Right cardiac atrium (tissue), 5 donors: ENCODE measurements at regions of chr3 and their contacts with region 1.

Region 1: GRCh38 chr3:183385698-183386613 is 42.5 kb downstream of the MCF2L2 start:
- DNase-seq: no peak
- ATAC-seq: peak; percentile 74 to 84
- H3K4me3 ChIP-seq: no peak overlapping the region
- H3K27ac ChIP-seq: no peak overlapping the region
- H3K4me1 ChIP-seq: no peaks in the 10 kb centered on the region
- H3K27me3 ChIP-seq: no peaks in the 10 kb centered on the region

Region 2: GRCh38 chr3:183116025-183116614 is 269.8 kb before region 1 on chr3:
- intact Hi-C with region 1: loop called (anchors 2 to 5 kb)
- DNase-seq: no peak
- ATAC-seq: peak in 1 of 2 donors; percentile 21
- H3K4me3 ChIP-seq: no peak overlapping the region
- H3K27ac ChIP-seq: no peak overlapping the region
- H3K4me1 ChIP-seq: no peaks in the 10 kb centered on the region
- H3K27me3 ChIP-seq: peaks cover 3% of the 10 kb centered on the region

Region 3: GRCh38 chr3:183122257-183122932 is 263.6 kb before region 1 on chr3:
- intact Hi-C with region 1: loop called (anchors 2 to 5 kb)
- DNase-seq: no peak
- ATAC-seq: peak in 1 of 2 donors; percentile 61
- H3K4me3 ChIP-seq: no peak overlapping the region
- H3K27ac ChIP-seq: no peak overlapping the region
- H3K4me1 ChIP-seq: no peaks in the 10 kb centered on the region
- H3K27me3 ChIP-seq: no peaks in the 10 kb centered on the region

Region 4: GRCh38 chr3:183185696-183186095 is 200.3 kb before region 1 on chr3:
- intact Hi-C with region 1: loop called (anchors 1 to 2 kb)
- DNase-seq: no peak
- ATAC-seq: no peak
- H3K4me3 ChIP-seq: no peak overlapping the region
- H3K27ac ChIP-seq: no peak overlapping the region
- H3K4me1 ChIP-seq: no peaks in the 10 kb centered on the region
- H3K27me3 ChIP-seq: no peaks in the 10 kb centered on the region

Region 5: GRCh38 chr3:183349421-183350157 is 36.4 kb before region 1 on chr3:
- intact Hi-C with region 1: no loop called
- DNase-seq: no peak
- ATAC-seq: no peak
- H3K4me3 ChIP-seq: no peak overlapping the region
- H3K27ac ChIP-seq: no peak overlapping the region
- H3K4me1 ChIP-seq: no peaks in the 10 kb centered on the region
- H3K27me3 ChIP-seq: no peaks in the 10 kb centered on the region